ENCODE measurements at regions of chr1 and their contacts with region 1.

Region 1: DNA sequence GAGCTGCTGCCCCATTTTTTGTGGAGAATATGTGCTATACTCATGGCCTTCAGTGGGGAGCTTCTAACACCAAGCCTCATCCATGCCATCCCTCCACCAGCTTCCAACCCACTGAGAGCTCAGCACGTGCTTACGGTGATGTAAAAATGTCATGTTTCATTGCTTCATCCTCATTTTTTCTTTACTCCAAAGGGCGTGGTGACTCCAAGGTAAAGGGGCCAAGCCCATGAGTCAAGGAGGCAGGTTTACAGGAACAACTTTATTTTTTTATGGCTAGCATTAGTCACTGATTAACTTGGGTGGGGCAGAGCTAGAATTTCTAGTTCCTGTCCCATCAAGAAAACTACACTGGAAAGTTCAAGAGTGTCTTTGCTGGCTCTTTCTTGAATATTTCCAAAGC is at the start of gene C1orf226:
- DNase-seq: no peak
- H3K4me3 ChIP-seq: no peak within 1 kb of the TSS
- CTCF ChIP-seq: no peak

Region 2: GRCh38 chr1:162391790-162392563 is 10.6 kb after region 1 on chr1:
- CTCF ChIA-PET with region 1: interaction called, 24 read pairs
- POLR2A ChIA-PET with region 1: no interaction called
- DNase-seq: no peak
- H3K4me3 ChIP-seq: no peak overlapping the region
- CTCF ChIP-seq: peak; percentile 76

Measured in AG04449 (cell line).